CD8-positive, alpha-beta T cell (primary cell): ENCODE measurements at regions of chr18 and their contacts with region 1.

Region 1: DNA sequence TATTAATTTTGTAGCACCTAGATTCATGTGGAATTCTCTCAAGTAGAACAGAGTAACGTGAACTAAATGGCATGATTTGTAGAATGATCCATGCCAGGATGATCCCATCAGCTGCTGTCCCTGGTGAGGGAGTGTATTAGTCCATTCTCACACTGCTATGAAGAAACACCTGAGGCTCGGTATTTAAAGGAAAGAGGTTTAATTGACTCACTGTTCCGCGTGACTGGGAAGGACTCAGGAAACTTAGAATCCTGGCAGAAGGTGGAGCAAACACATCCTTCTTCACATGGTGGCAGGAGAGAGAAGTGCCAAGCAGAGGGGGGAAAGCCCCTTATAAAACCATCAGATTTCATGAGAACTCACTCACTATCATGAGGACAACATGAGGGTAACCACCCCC is 312.6 kb downstream of the PTPRM start:
- DNase-seq: no peak
- ATAC-seq: no peak
- H3K4me3 ChIP-seq: no peak overlapping the region
- H3K4me3 Mint-ChIP-seq: no peak overlapping the region
- H3K27ac ChIP-seq: no peak overlapping the region
- H3K27ac Mint-ChIP-seq: no peak overlapping the region
- H3K4me1 ChIP-seq: no peaks in the 10 kb centered on the region
- H3K4me1 Mint-ChIP-seq: no peaks in the 10 kb centered on the region
- H3K27me3 ChIP-seq: no peaks in the 10 kb centered on the region
- H3K27me3 Mint-ChIP-seq: peaks cover 3% of the 10 kb centered on the region
- CTCF ChIP-seq: no peak

Region 2: GRCh38 chr18:7946734-7947377 is 67.1 kb after region 1 on chr18:
- CTCF ChIA-PET with region 1: no interaction called
- POLR2A ChIA-PET with region 1: no interaction called
- intact Hi-C with region 1: loop called in 1 of 2 experiments (anchors 10 kb)
- DNase-seq: peak in 2 of 9 experiments; percentile 47 to 71
- ATAC-seq: peak; percentile 40
- H3K4me3 ChIP-seq: peak overlapping the region in 1 of 2 experiments; percentile 52
- H3K4me3 Mint-ChIP-seq: peak overlapping the region; percentile 53
- H3K27ac ChIP-seq: peak overlapping the region in 1 of 2 experiments; percentile 68
- H3K27ac Mint-ChIP-seq: peak overlapping the region; percentile 53
- H3K4me1 ChIP-seq: no peaks in the 10 kb centered on the region
- H3K4me1 Mint-ChIP-seq: no peaks in the 10 kb centered on the region
- H3K27me3 ChIP-seq: no peaks in the 10 kb centered on the region
- H3K27me3 Mint-ChIP-seq: no peaks in the 10 kb centered on the region
- CTCF ChIP-seq: no peak